GM12878 (cell line): ENCODE measurements at regions of chr11 and their contacts with region 1.

Region 1: DNA sequence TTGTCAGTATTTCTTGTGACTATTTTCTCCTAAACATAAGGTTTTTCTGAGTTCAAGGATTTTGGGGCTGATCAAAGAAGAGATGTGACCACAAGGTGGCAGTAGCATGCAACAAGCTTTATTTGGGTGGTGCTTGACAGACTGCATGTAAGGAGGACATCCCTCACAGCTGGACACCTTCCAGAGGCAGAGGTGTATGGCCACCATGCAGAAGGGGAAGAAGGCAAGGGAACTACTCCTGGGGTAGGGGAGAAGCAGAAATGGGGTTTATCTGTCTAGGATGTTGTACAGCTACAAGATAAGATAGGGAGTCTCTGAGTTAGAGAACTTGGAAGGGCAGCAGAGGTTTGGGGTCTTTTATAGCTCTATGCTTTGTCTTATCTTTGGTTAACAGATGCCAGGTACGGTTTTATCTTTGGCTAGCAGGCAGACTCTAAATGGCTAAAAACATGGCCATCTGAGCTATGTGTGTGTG is 5.1 kb upstream of the BIRC2 start:
- DNase-seq: peak; percentile 76
- ATAC-seq: peak; percentile 67
- H3K4me3 ChIP-seq: no peak overlapping the region
- H3K27ac ChIP-seq: no peak overlapping the region
- H3K4me1 ChIP-seq: no peaks in the 10 kb centered on the region
- H3K27me3 ChIP-seq: no peaks in the 10 kb centered on the region
- CTCF ChIP-seq: peak; percentile 78 to 84 (median 79)
- EP300 ChIP-seq: no peak
- POLR2A ChIP-seq: no peak
- RAD21 ChIP-seq: peak; percentile 94

Region 2: GRCh38 chr11:102268329-102269193 is 73.3 kb before region 1 on chr11:
- CTCF ChIA-PET with region 1: interaction called, 11 read pairs
- POLR2A ChIA-PET with region 1: no interaction called
- RAD21 ChIA-PET with region 1: interaction called, 4 read pairs
- SMC1A ChIA-PET with region 1: interaction called, 5 read pairs
- in situ Hi-C with region 1: no loop called
- intact Hi-C with region 1: no loop called
- DNase-seq: peak; percentile 17
- ATAC-seq: peak; percentile 98
- H3K4me3 ChIP-seq: peak overlapping the region; percentile 66
- H3K27ac ChIP-seq: no peak overlapping the region
- H3K4me1 ChIP-seq: no peaks in the 10 kb centered on the region; the same call in 1 of the 2 replicates
- H3K27me3 ChIP-seq: peaks cover 0 to 8% of the 10 kb centered on the region in 2 experiments; a peak in 2 of 4 replicates
- CTCF ChIP-seq: peak in 2 of 3 experiments; percentile 43 to 55; a peak in 4 of 6 replicates
- EP300 ChIP-seq: no peak
- POLR2A ChIP-seq: no peak
- RAD21 ChIP-seq: peak; percentile 30; the same call in 1 of the 2 replicates

Region 3: GRCh38 chr11:102323542-102324251 is 18.2 kb before region 1 on chr11:
- CTCF ChIA-PET with region 1: interaction called, 19 read pairs
- POLR2A ChIA-PET with region 1: interaction called, 3 read pairs
- RAD21 ChIA-PET with region 1: interaction called, 10 read pairs
- SMC1A ChIA-PET with region 1: interaction called, 22 read pairs
- in situ Hi-C with region 1: no loop called
- intact Hi-C with region 1: no loop called
- DNase-seq: no peak
- ATAC-seq: no peak
- H3K4me3 ChIP-seq: peak overlapping the region; percentile 49; the same call in 1 of the 2 replicates
- H3K27ac ChIP-seq: no peak overlapping the region
- H3K4me1 ChIP-seq: no peaks in the 10 kb centered on the region
- H3K27me3 ChIP-seq: no peaks in the 10 kb centered on the region
- CTCF ChIP-seq: no peak
- EP300 ChIP-seq: no peak
- POLR2A ChIP-seq: no peak
- RAD21 ChIP-seq: no peak

Region 4: GRCh38 chr11:102396708-102397563 is 55.1 kb after region 1 on chr11:
- CTCF ChIA-PET with region 1: interaction called, 64 read pairs
- POLR2A ChIA-PET with region 1: no interaction called
- RAD21 ChIA-PET with region 1: interaction called, 7 read pairs
- SMC1A ChIA-PET with region 1: interaction called, 11 read pairs
- in situ Hi-C with region 1: no loop called
- intact Hi-C with region 1: no loop called
- DNase-seq: no peak
- ATAC-seq: peak; percentile 16; the same call in 2 of the 3 replicates
- H3K4me3 ChIP-seq: no peak overlapping the region
- H3K27ac ChIP-seq: no peak overlapping the region
- H3K4me1 ChIP-seq: peaks cover 5% of the 10 kb centered on the region
- H3K27me3 ChIP-seq: no peaks in the 10 kb centered on the region
- CTCF ChIP-seq: no peak
- EP300 ChIP-seq: no peak
- POLR2A ChIP-seq: no peak
- RAD21 ChIP-seq: no peak

Region 5: DNA sequence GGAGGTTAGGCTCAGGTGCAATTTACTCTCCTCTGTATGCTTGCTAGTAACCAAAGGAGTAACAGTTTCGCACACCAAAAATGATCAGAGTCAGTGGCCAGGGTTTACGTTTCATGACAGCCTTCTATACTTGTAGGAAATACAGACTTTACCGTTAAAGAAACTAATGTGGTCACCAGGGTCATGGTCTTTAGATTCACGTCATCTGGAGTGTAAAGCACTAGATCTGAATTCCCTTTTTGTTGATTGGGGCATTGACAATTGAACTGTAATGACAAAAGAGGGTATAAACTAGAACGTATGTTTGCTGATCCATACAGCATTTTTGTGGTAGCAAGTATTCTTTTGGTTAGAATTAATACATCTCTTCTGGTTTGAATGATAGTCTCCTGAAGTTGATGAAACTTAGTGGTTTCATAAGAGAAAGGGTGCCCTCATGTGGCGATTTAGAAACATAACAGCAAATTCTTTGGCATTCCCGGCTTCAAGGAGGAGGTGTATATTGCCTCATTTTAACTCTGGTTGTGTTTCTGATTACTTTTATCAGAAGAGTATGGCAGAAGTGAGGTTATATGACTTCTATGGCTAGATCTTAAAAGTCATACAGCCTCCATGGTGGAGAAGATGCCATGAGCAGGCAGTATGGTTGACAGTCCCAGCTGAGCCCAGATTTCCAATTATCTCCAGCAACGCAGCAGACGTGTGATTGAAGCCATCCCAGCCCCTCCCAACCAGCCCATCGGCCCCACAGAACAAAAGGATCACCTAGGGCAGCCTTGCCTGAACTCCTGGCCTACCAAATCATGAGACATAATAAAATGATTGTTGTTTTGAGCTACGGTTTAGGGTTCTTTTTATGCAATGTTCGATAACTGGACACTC is 153.5 kb after region 1 on chr11:
- CTCF ChIA-PET with region 1: interaction called, 78 read pairs
- POLR2A ChIA-PET with region 1: interaction called, 11 read pairs
- RAD21 ChIA-PET with region 1: interaction called, 54 read pairs
- SMC1A ChIA-PET with region 1: interaction called, 38 read pairs
- in situ Hi-C with region 1: no loop called
- intact Hi-C with region 1: loop called (anchors 1 kb)
- DNase-seq: peak; percentile 79
- ATAC-seq: peak; percentile 97
- H3K4me3 ChIP-seq: peak overlapping the region; percentile 34; the same call in 1 of the 2 replicates
- H3K27ac ChIP-seq: no peak overlapping the region
- H3K4me1 ChIP-seq: peaks cover 14% of the 10 kb centered on the region
- H3K27me3 ChIP-seq: 0 out of 4 replicates have a peak, but pooled peaks cover 0 to 3% of the 10 kb centered on the region in 2 experiments
- CTCF ChIP-seq: peak; percentile 53 to 78 (median 56); a peak in 5 of 6 replicates
- EP300 ChIP-seq: peak; percentile 67 to 68; a peak in 3 of 4 replicates
- POLR2A ChIP-seq: no peak
- RAD21 ChIP-seq: peak; percentile 90

Region 6: GRCh38 chr11:102546923-102547471 is 205.1 kb after region 1 on chr11:
- CTCF ChIA-PET with region 1: interaction called, 8 read pairs
- POLR2A ChIA-PET with region 1: interaction called, 3 read pairs
- RAD21 ChIA-PET with region 1: interaction called, 10 read pairs
- SMC1A ChIA-PET with region 1: interaction called, 4 read pairs
- in situ Hi-C with region 1: no loop called
- intact Hi-C with region 1: loop called (anchors 1 kb)
- DNase-seq: peak; percentile 93
- ATAC-seq: peak; percentile 81
- H3K4me3 ChIP-seq: no peak overlapping the region
- H3K27ac ChIP-seq: peak overlapping the region; percentile 68; the same call in 1 of the 2 replicates
- H3K4me1 ChIP-seq: peaks cover 37% of the 10 kb centered on the region
- H3K27me3 ChIP-seq: no peaks in the 10 kb centered on the region
- CTCF ChIP-seq: peak in 1 of 3 experiments; percentile 3; a peak in 1 of 6 replicates
- EP300 ChIP-seq: peak; percentile 93 to 95; a peak in 3 of 4 replicates
- POLR2A ChIP-seq: no peak
- RAD21 ChIP-seq: peak; percentile 32; the same call in 1 of the 2 replicates

Region 7: GRCh38 chr11:103806130-103806900 is 1464.4 kb after region 1 on chr11:
- CTCF ChIA-PET with region 1: no interaction called
- POLR2A ChIA-PET with region 1: no interaction called
- RAD21 ChIA-PET with region 1: no interaction called
- SMC1A ChIA-PET with region 1: no interaction called
- in situ Hi-C with region 1: no loop called
- intact Hi-C with region 1: no loop called
- DNase-seq: no peak
- ATAC-seq: no peak
- H3K4me3 ChIP-seq: no peak overlapping the region
- H3K27ac ChIP-seq: no peak overlapping the region
- H3K4me1 ChIP-seq: no peaks in the 10 kb centered on the region
- H3K27me3 ChIP-seq: no peaks in the 10 kb centered on the region; a peak in 1 of 4 replicates
- CTCF ChIP-seq: no peak
- EP300 ChIP-seq: no peak
- POLR2A ChIP-seq: no peak
- RAD21 ChIP-seq: no peak